Activated T-helper 1 cell treated with anti-CD3 and anti-CD28 coated beads, Interleukin-12 subunit alpha, Interleukin-12 subunit beta, Interleukin-2, Interleukin-4 antibody, amounts not matched to agents 30 ng/mL and 10 ng/mL and 1 ng/mL, durations not matched to agents 14 hours and 24 hours and 36 hours (primary cell): ENCODE measurements at regions of chr17 and their contacts with region 1.

Region 1: DNA sequence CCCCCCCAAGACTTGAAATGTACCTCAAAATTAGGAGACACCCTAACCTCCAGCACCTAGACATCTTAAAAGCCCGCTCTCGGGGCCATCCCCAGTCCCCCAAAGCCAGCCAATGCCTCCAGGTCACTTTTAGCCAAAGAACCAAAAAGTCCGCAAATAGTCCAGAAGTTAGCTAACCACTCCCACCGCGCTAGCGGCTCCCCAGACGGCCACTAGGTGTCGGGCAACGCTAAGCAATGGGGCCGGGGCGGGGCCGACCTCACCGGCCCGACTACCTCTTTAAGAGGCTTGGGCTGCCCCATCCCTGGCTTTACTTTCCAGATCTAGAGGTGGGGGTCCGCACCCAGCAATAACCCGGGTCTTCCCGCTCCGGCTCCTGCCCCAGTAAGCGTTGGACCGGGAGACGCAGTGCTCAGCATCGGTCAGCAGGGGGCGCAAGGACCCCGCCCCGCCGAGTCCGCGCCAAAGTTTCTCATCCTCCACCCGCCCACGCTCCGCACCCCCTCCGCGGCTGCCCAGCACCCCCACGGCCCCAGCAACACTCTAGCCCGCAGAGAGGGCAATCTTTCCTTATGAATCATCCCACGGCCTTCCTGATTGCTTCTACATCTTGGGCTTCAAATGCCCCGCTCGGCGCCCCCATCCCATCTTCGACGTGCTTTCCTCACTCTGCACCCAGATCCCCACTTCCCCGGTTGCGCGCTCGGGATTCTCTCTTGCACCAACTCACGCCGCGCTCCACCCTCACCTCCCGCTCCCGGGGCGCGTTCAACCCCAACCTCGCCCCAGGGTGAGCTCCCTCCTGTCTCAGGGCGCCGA is 765 bp downstream of the COL1A1 start:
- DNase-seq: peak; percentile 74
- H3K4me3 Mint-ChIP-seq: peak overlapping the region; percentile 77
- H3K27ac Mint-ChIP-seq: peak overlapping the region; percentile 79
- H3K4me1 Mint-ChIP-seq: peaks cover 17% of the 10 kb centered on the region
- H3K27me3 Mint-ChIP-seq: peaks cover 70% of the 10 kb centered on the region

Region 2: DNA sequence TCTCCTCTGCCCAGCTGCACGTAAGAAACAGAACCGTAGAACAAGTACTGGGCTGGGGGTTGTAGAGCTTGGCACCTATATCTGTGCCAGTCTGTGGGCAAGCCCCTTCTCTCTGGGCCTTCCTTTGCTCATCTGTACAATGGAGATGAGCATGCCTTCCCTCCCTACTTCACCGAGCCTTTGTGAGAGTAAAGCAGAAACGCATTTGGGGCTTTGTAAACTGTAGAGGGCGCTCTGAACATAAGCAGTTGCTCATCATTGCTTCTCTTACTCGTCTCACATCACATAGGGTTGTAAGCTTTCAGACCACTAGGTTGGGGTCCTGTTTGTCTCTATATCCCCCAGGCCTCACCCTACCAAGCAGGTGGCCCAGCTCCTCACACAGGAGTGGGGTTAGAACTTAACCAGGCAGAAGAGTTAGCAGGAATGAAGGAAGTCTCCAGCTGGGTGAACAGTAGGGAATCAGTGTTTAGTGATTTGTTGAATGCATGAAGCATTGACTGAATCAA is 85.8 kb before region 1 on chr17:
- intact Hi-C with region 1: loop called (anchors 1 kb)
- DNase-seq: no peak
- H3K4me3 Mint-ChIP-seq: no peak overlapping the region
- H3K27ac Mint-ChIP-seq: no peak overlapping the region
- H3K4me1 Mint-ChIP-seq: peaks cover 15% of the 10 kb centered on the region
- H3K27me3 Mint-ChIP-seq: peaks cover 40% of the 10 kb centered on the region

Region 3: DNA sequence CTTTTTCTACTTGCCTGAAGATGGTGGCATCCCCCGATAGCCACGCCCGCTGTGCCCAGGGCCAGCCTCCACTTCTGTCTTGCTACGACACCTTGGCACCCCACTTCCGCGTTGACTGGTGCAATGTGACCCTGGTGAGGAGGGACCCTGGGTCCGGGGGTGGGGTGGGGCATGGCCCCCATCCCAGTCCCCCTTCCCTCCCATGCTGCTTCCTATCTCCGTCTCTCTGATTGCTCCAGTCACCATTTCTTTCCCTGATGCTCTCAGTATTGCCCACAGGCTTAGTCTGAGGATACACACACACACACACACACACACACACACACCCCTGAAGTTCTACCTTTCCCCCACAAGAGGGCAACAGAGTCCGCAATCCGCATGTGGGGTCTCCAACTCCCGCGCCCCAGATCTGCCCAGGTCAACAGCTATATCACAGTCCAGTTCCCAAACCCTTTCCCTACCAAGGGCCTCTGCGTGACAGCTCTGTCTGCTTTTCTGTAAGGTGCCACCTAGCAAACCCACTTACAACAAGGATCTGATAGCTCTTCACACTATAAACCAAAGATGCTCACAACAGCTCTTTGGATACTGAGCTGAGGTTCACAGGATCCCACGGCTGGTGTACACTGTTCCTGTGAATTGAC is 31.4 kb before region 1 on chr17:
- intact Hi-C with region 1: loop called (anchors 1 kb)
- DNase-seq: peak; percentile 47
- H3K4me3 Mint-ChIP-seq: peak overlapping the region; percentile 15
- H3K27ac Mint-ChIP-seq: peak overlapping the region; percentile 7
- H3K4me1 Mint-ChIP-seq: peaks cover 17% of the 10 kb centered on the region
- H3K27me3 Mint-ChIP-seq: peaks cover 9% of the 10 kb centered on the region

Region 4: DNA sequence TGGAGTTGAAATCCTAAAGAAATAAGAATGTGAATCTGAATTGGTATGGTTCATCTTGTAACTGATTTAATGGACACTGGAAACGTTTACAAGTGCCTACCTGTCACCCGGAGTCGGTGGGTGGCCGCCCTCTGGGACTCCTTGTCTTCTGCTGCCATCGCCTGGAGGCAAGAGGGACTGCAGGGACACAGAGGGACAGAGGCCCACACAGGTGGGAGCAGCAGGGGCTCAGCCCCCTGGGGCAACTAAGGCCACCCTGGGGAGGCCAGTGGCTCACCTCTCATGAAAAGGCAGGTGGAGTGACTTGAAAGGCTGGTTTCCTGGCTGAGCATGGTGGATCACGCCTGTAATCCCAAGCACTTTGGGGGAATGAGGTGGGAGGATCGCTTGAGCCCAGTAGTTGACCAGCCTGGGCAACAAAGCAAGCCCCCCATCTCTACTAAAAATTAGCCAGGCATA is 96.8 kb after region 1 on chr17:
- intact Hi-C with region 1: loop called (anchors 1 kb)
- DNase-seq: peak; percentile 69
- H3K4me3 Mint-ChIP-seq: no peak overlapping the region
- H3K27ac Mint-ChIP-seq: no peak overlapping the region
- H3K4me1 Mint-ChIP-seq: peaks cover 8% of the 10 kb centered on the region
- H3K27me3 Mint-ChIP-seq: peaks cover 3% of the 10 kb centered on the region